PC-9 (cell line): ENCODE measurements at regions of chr2 and their contacts with region 1.

Region 1: DNA sequence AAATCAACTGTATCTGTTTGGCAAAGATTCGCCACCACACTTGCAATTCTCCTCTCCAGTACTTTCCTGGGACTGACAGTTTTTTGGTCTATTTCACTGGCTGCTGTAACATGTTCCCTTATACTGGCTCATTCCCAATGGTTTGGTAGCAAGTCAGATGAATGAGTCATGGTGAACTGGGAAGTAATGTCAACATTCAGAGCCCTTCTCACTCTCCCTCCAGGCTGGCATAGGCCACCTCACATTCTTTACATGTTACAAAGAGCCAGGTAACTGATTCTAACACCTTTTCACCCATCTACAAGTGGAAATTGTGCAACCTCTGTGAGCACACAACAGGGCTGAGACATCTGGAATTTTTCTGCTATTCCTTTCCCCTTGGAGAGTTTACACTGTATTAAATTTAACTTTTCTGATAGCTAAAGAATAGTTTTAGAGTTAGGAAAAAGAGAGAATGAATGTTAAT is 111.3 kb upstream of the TLK1 start:
- DNase-seq: peak; percentile 82 to 100
- H3K4me3 ChIP-seq: peak overlapping the region; percentile 30; the same call in 1 of the 2 replicates
- H3K27ac ChIP-seq: peak overlapping the region; percentile 93
- H3K4me1 ChIP-seq: peaks cover 43% of the 10 kb centered on the region
- H3K27me3 ChIP-seq: no peaks in the 10 kb centered on the region
- CTCF ChIP-seq: no peak

Region 2: DNA sequence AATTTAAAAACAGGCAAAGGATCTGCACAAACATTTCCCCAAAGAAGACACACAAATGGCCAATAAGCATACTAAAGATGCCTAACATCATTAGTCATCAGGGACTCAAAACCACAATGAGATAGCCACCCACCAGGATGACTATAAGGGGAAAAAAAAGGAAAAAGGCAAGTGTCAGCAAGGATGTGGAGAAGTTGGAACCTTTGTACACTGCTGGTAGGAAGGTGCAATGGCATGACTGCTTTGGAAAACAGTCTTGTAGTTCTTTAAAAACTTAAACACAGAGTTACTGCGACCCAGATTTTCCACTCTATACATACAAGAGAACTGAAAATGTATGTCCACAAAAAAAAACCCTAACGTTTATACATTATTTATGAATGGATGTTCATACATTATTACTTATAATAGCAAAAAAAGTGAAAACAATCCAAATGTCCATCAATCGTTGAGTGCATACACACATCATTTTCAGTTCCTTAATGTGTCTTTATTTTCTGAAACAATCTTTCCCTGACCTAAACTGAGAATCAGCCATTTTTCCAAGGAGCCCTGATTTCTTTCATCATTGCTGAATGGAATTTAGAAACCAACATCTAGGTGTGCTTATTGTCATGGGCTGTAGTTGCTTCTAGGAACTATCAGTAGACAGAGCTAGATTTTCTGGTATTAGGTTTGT is 46.6 kb before region 1 on chr2:
- CTCF ChIA-PET with region 1: no interaction called
- POLR2A ChIA-PET with region 1: no interaction called
- intact Hi-C with region 1: loop called (anchors 1 kb)
- DNase-seq: peak; percentile 43 to 92
- H3K4me3 ChIP-seq: no peak overlapping the region
- H3K27ac ChIP-seq: peak overlapping the region; percentile 45
- H3K4me1 ChIP-seq: peaks cover 41% of the 10 kb centered on the region
- H3K27me3 ChIP-seq: no peaks in the 10 kb centered on the region
- CTCF ChIP-seq: peak; percentile 56

Region 3: GRCh38 chr2:171347591-171348032 is 75.6 kb after region 1 on chr2:
- CTCF ChIA-PET with region 1: no interaction called
- POLR2A ChIA-PET with region 1: no interaction called
- intact Hi-C with region 1: loop called (anchors 1 kb)
- DNase-seq: peak; percentile 60 to 93
- H3K4me3 ChIP-seq: no peak overlapping the region
- H3K27ac ChIP-seq: peak overlapping the region; percentile 43
- H3K4me1 ChIP-seq: peaks cover 30% of the 10 kb centered on the region
- H3K27me3 ChIP-seq: no peaks in the 10 kb centered on the region
- CTCF ChIP-seq: no peak

Region 4: DNA sequence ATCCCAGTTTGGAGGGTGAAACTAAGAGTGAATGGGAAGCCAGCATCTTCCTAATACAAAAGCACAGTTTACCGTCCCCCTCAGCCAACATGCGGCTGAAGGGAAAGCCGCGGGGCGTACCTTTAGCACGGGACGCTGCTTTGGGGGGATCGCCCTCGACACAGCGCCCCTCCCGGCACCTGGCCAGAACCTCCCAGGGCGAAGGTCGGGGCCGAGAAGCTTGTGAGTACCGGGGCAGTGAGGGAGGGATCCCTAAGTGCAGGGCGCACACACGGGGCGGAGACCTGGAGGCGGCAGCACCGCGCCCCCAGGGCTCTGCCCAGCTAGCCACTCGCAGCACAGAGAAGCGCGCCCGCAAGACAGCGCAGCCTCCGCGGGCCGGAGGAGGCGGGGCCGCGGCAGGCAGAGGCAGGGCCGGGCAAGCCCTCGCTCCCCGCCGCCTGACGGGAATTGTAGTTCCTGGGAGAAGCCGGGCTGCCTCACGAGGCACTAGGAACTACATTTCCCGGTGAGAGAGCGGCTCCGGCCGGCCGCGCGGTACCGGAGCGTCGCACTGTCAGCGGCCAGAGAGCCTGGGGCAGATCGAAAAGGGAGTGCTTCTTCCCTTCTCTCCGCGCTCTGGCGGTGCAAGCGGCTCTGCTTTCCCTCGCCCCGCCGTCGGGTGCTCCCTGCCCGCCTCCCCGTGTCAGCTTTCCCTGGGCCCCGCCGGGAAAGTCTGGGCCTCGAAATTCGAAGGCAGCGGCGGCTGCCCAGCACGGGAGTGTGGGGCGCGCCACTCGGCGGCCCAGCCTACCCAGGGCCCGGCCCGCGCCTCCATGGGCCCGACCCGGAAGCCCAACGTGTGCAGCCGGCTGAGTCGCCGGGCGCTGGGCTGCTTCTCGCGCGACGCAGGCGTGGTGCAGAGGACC is 162.0 kb after region 1 on chr2 and contains the starts of genes DCAF17 and METTL8:
- CTCF ChIA-PET with region 1: no interaction called
- POLR2A ChIA-PET with region 1: no interaction called
- intact Hi-C with region 1: loop called (anchors 5 kb)
- DNase-seq: peak; percentile 95 to 98
- H3K4me3 ChIP-seq: peak within 1 kb of the TSS; percentile 64
- H3K27ac ChIP-seq: peak within 1 kb of the TSS; percentile 93
- H3K4me1 ChIP-seq: peaks cover 25% of the 10 kb centered on the region
- H3K27me3 ChIP-seq: no peaks in the 10 kb centered on the region
- CTCF ChIP-seq: peak; percentile 50
- total RNA-seq, gene DCAF17: 22.0 and 22.1 TPM in 2 replicates
- total RNA-seq, gene METTL8: 21.8 and 24.3 TPM in 2 replicates

Region 5: GRCh38 chr2:171522052-171522787 is 250.2 kb after region 1 on chr2 and contains the start of gene CYBRD1:
- CTCF ChIA-PET with region 1: no interaction called
- POLR2A ChIA-PET with region 1: no interaction called
- intact Hi-C with region 1: loop called (anchors 10 kb)
- DNase-seq: peak; percentile 66 to 92
- H3K4me3 ChIP-seq: peak within 1 kb of the TSS; percentile 83
- H3K27ac ChIP-seq: peak within 1 kb of the TSS; percentile 81
- H3K4me1 ChIP-seq: peaks cover 21% of the 10 kb centered on the region
- H3K27me3 ChIP-seq: no peaks in the 10 kb centered on the region
- CTCF ChIP-seq: no peak
- total RNA-seq, gene CYBRD1: 125 and 132 TPM in 2 replicates